T-cell (primary cell): ENCODE measurements at regions of chr11 and their contacts with region 1.

Region 1: GRCh38 chr11:75286826-75287465 is 46.4 kb downstream of the TPBGL start:
- DNase-seq: no peak
- ATAC-seq: no peak
- H3K4me3 ChIP-seq: no peak overlapping the region
- H3K4me3 Mint-ChIP-seq: no peak overlapping the region
- H3K27ac ChIP-seq: no peak overlapping the region
- H3K27ac Mint-ChIP-seq: peak overlapping the region; percentile 19 to 44
- H3K4me1 ChIP-seq: no peaks in the 10 kb centered on the region
- H3K4me1 Mint-ChIP-seq: peaks cover 0 to 11% (median 8%) of the 10 kb centered on the region in 3 donors
- H3K27me3 ChIP-seq: no peaks in the 10 kb centered on the region
- H3K27me3 Mint-ChIP-seq: no peaks in the 10 kb centered on the region

Region 2: GRCh38 chr11:75063732-75064314 is 223.1 kb before region 1 on chr11:
- CTCF ChIA-PET with region 1: no interaction called
- POLR2A ChIA-PET with region 1: no interaction called
- DNase-seq: no peak
- ATAC-seq: no peak
- H3K4me3 ChIP-seq: no peak overlapping the region
- H3K4me3 Mint-ChIP-seq: no peak overlapping the region
- H3K27ac ChIP-seq: no peak overlapping the region
- H3K27ac Mint-ChIP-seq: no peak overlapping the region
- H3K4me1 ChIP-seq: no peaks in the 10 kb centered on the region
- H3K4me1 Mint-ChIP-seq: no peaks in the 10 kb centered on the region
- H3K27me3 ChIP-seq: peaks cover 0 to 4% of the 10 kb centered on the region in 2 experiments
- H3K27me3 Mint-ChIP-seq: peaks cover 27 to 28% of the 10 kb centered on the region in 2 donors

Region 3: DNA sequence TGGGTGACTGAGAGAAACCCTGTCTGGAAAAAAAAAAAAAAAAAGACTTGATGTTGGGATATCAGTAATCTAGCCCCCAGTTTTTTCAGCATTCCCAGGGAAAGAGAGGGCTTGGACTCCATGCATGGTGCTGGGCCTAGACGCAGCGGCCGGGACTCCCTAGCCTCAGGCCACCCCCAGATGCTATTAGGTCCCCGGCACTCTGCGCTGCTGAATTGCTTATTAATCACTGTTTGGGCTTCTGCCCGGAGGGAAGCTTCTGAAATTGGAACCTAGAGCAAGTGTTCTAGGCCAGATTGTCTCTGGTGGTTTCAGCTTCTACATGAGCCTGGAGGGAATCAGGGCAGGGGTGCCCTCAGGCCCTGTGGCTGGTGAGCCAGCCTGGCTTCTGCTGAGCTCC is 97.0 kb before region 1 on chr11:
- CTCF ChIA-PET with region 1: no interaction called
- POLR2A ChIA-PET with region 1: interaction called in 1 of 2 experiments, 13 read pairs
- DNase-seq: no peak
- ATAC-seq: no peak
- H3K4me3 ChIP-seq: no peak overlapping the region
- H3K4me3 Mint-ChIP-seq: no peak overlapping the region
- H3K27ac ChIP-seq: no peak overlapping the region
- H3K27ac Mint-ChIP-seq: no peak overlapping the region
- H3K4me1 ChIP-seq: no peaks in the 10 kb centered on the region
- H3K4me1 Mint-ChIP-seq: no peaks in the 10 kb centered on the region
- H3K27me3 ChIP-seq: peaks cover 0 to 15% of the 10 kb centered on the region in 2 experiments
- H3K27me3 Mint-ChIP-seq: no peaks in the 10 kb centered on the region

Region 4: DNA sequence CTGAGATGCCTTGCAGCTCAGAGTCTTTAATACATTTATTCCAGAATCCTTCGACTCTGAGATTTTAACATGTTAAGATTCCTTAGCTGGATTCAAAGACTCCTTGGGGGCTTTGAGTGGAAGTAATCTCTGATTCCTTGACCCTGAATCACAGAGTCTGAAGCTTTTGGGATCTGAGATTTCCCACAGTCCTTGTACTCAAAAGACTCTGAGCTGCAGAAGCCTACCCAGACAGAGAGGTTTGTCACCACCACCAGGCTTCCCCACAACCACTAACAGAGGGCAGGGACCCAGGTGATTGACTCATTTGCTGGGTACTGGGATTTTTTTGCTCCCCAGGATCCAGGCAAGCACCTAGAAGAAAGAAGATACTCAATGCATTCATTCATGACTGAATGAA is 273.7 kb after region 1 on chr11:
- CTCF ChIA-PET with region 1: no interaction called
- POLR2A ChIA-PET with region 1: interaction called in 1 of 2 experiments, 10 read pairs
- DNase-seq: no peak
- ATAC-seq: no peak
- H3K4me3 ChIP-seq: no peak overlapping the region
- H3K4me3 Mint-ChIP-seq: peak overlapping the region; percentile 61 to 98 (median 71)
- H3K27ac ChIP-seq: no peak overlapping the region
- H3K27ac Mint-ChIP-seq: peak overlapping the region in 1 of 2 donors; percentile 73
- H3K4me1 ChIP-seq: peaks cover 3 to 35% of the 10 kb centered on the region in 2 experiments
- H3K4me1 Mint-ChIP-seq: peaks cover 39 to 43% (median 40%) of the 10 kb centered on the region in 3 donors
- H3K27me3 ChIP-seq: peaks cover 0 to 3% of the 10 kb centered on the region in 2 experiments
- H3K27me3 Mint-ChIP-seq: no peaks in the 10 kb centered on the region